PC-9 (cell line): ENCODE measurements at regions of chr12 and their contacts with region 1.

Region 1: DNA sequence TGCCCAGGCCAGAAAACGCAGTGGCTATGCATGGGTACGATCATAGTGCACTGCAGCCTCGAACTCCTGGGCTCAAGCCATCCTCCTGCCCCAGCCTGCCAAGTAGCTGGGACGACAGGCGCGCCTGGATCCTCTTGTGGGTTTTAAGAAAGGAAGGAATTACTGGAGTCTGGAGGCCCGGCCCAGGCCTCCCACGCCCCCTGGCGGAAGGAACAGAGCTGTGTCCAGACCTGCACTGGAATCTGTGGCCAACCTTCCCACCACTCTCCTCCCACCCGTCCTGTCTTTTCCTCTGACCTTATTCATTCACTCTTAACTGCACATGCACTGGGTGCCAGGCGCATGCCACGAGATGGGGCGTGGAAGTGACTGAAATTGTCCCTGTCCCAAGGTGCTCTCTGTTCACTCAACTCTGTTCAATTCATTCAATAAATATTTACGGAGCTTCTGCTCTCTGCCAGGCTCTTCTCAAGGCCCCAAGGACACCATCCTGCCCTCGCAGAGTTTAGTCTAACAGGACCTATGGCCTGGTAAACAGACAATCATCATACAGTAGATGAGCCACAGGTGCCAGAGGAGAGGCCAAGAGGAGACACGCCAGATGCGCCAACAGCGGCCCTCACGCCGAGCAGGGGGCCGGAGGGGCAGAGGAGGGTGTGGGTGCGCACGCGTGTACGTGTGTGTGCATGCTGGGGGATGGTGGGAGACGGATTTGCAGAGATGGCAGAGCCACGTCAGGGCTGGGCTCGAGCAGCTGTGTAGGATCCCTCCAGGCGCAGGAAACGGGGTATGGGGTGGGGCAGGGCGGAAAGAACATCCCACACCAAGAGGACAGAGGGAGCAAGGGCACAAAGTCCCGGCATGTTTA is 13.7 kb upstream of the TMEM106C start:
- DNase-seq: peak; percentile 66 to 79
- H3K4me3 ChIP-seq: no peak overlapping the region
- H3K27ac ChIP-seq: no peak overlapping the region
- H3K4me1 ChIP-seq: peaks cover 51% of the 10 kb centered on the region
- H3K27me3 ChIP-seq: no peaks in the 10 kb centered on the region
- CTCF ChIP-seq: peak; percentile 93

Region 2: GRCh38 chr12:47616440-47616839 is 333.2 kb before region 1 on chr12:
- CTCF ChIA-PET with region 1: no interaction called
- POLR2A ChIA-PET with region 1: no interaction called
- intact Hi-C with region 1: no loop called
- DNase-seq: no peak
- H3K4me3 ChIP-seq: no peak overlapping the region
- H3K27ac ChIP-seq: no peak overlapping the region
- H3K4me1 ChIP-seq: no peaks in the 10 kb centered on the region
- H3K27me3 ChIP-seq: no peaks in the 10 kb centered on the region
- CTCF ChIP-seq: no peak

Region 3: GRCh38 chr12:47742253-47742825 is 207.3 kb before region 1 on chr12:
- CTCF ChIA-PET with region 1: no interaction called
- POLR2A ChIA-PET with region 1: no interaction called
- intact Hi-C with region 1: no loop called
- DNase-seq: peak in 1 of 2 experiments; percentile 66
- H3K4me3 ChIP-seq: no peak overlapping the region
- H3K27ac ChIP-seq: no peak overlapping the region
- H3K4me1 ChIP-seq: peaks cover 8% of the 10 kb centered on the region
- H3K27me3 ChIP-seq: no peaks in the 10 kb centered on the region
- CTCF ChIP-seq: peak; percentile 100

Region 4: GRCh38 chr12:47858511-47859266 is 91.0 kb before region 1 on chr12:
- CTCF ChIA-PET with region 1: interaction called, 3 read pairs
- POLR2A ChIA-PET with region 1: no interaction called
- intact Hi-C with region 1: loop called (anchors 5 kb)
- DNase-seq: peak; percentile 54 to 55
- H3K4me3 ChIP-seq: no peak overlapping the region
- H3K27ac ChIP-seq: no peak overlapping the region
- H3K4me1 ChIP-seq: peaks cover 11% of the 10 kb centered on the region
- H3K27me3 ChIP-seq: no peaks in the 10 kb centered on the region
- CTCF ChIP-seq: no peak

Region 5: DNA sequence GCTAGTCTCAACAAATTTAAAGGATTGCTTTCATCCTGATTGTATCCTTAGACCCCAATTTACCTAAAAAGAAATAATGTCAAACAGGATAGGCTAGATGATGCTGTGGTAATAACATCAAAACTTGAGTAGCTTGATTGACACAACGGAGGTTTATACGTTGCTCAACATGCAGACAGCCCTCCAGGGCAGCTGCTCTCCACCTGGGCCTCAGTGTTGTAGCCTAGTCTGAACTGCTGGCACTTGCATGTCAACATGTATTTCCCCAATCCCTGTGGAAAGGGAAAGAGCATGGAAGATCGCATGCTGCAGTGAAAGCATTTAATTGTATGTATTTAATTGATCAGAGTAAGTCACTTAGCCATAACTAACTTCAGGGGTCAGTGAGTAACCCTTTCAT is 33.1 kb before region 1 on chr12:
- CTCF ChIA-PET with region 1: no interaction called
- POLR2A ChIA-PET with region 1: no interaction called
- intact Hi-C with region 1: no loop called
- DNase-seq: no peak
- H3K4me3 ChIP-seq: no peak overlapping the region
- H3K27ac ChIP-seq: no peak overlapping the region
- H3K4me1 ChIP-seq: no peaks in the 10 kb centered on the region
- H3K27me3 ChIP-seq: no peaks in the 10 kb centered on the region
- CTCF ChIP-seq: no peak